Transverse colon (tissue), 4 donors: ENCODE measurements at regions of chrX and their contacts with region 1.

Region 1: DNA sequence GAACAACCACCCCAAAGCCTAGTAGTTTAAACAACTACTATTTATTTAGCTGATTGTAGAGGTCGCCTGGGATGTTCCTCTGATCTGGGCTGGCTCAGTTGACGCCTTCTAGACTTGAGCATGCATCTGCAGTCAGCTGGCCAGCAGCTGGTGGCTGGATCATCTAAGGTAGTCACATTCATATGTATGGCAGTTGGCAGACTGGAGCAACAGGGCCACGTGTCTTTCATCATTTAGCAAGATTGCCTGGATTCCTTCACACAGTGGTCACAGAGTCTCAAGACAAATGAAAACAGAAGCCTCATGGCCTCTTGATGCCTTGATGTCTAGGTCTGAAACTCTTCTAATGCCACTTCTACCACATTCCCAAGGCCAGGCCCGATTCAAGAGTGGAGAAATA is 220.6 kb upstream of the S100G start:
- DNase-seq: no peak
- H3K4me3 ChIP-seq: no peak overlapping the region
- H3K27ac ChIP-seq: no peak overlapping the region
- H3K4me1 ChIP-seq: no peaks in the 10 kb centered on the region
- H3K27me3 ChIP-seq: no peaks in the 10 kb centered on the region
- CTCF ChIP-seq: no peak
- EP300 ChIP-seq: no peak
- POLR2A ChIP-seq: no peak

Region 2: DNA sequence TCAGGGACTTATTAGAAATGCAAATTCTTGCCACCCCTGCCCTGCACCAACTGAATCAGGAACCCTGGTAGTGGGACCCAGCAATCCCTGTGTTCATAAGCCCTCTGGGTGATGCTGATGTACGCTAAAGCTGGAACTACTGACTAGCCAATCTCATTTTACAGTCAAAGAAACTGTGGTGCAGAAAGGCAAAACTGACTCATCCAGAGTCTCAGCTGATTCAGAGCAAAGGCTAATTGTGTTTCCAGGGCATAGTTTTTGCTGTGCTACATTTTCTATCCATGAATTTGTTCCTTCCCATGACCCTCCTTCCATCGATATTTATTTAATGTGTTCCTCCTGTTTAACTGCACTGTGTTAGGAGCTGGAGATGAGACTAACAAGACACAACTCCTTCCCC is 724.6 kb after region 1 on chrX:
- in situ Hi-C with region 1: no loop called
- intact Hi-C with region 1: loop called (anchors 10 kb)
- DNase-seq: no peak
- H3K4me3 ChIP-seq: no peak overlapping the region
- H3K27ac ChIP-seq: no peak overlapping the region
- H3K4me1 ChIP-seq: no peaks in the 10 kb centered on the region
- H3K27me3 ChIP-seq: no peaks in the 10 kb centered on the region
- CTCF ChIP-seq: no peak
- EP300 ChIP-seq: no peak
- POLR2A ChIP-seq: no peak